ENCODE measurements at regions of chr15 and their contacts with region 1.

Region 1: DNA sequence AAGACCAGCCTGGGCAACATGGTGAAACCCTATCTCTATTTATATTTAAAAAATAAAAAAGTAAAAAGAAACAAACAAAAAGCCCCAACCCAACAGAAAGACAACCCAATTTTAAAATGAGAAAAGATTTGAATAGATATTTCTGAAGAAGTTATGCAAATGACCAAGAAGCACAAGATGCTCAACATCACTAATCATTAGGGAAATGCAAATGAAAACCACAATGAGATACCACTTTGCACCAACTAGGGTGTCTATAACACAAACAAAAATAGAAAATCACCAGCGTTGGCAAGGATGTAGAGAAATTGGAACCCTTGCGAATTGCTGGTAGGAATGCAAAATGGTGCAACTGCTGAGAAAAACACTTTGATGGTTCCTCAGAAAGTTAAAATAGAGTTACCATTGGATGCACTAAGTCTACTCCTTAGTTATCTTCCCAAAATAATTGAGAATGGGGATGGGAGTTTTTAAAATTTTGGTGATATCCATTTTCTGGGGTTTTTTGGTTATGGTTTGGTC is 45.8 kb upstream of the CCNB2 start:
- DNase-seq: no peak
- H3K27ac ChIP-seq: no peak overlapping the region
- CTCF ChIP-seq: no peak

Region 2: GRCh38 chr15:59048897-59049296 is 10.2 kb before region 1 on chr15:
- CTCF ChIA-PET with region 1: interaction called, 10 read pairs
- POLR2A ChIA-PET with region 1: no interaction called
- DNase-seq: no peak
- H3K27ac ChIP-seq: no peak overlapping the region
- CTCF ChIP-seq: no peak

Region 3: GRCh38 chr15:59099162-59099685 is 40.1 kb after region 1 on chr15:
- CTCF ChIA-PET with region 1: no interaction called
- POLR2A ChIA-PET with region 1: no interaction called
- DNase-seq: no peak
- H3K27ac ChIP-seq: no peak overlapping the region
- CTCF ChIP-seq: no peak

Region 4: DNA sequence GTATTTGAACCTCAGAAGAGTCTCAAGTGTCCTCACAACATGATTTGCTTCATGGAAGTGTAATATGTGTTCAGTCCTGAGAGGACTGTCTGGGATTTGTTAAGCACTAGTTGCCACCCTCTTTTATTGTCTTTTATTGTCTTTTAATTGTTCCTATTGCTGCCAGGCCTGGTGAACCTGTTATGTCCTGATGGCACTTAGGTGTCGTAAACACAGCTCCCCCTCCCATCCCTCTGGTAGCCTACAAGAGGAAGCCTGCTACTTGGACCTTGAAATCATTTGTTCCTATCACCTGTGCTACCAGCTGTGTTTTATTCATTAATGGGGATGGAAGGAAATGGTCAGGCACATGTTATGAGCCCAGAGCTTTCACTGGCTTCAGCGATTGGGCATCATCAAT is 65.1 kb after region 1 on chr15:
- CTCF ChIA-PET with region 1: no interaction called
- POLR2A ChIA-PET with region 1: no interaction called
- DNase-seq: no peak
- H3K27ac ChIP-seq: no peak overlapping the region
- CTCF ChIP-seq: no peak

Region 5: DNA sequence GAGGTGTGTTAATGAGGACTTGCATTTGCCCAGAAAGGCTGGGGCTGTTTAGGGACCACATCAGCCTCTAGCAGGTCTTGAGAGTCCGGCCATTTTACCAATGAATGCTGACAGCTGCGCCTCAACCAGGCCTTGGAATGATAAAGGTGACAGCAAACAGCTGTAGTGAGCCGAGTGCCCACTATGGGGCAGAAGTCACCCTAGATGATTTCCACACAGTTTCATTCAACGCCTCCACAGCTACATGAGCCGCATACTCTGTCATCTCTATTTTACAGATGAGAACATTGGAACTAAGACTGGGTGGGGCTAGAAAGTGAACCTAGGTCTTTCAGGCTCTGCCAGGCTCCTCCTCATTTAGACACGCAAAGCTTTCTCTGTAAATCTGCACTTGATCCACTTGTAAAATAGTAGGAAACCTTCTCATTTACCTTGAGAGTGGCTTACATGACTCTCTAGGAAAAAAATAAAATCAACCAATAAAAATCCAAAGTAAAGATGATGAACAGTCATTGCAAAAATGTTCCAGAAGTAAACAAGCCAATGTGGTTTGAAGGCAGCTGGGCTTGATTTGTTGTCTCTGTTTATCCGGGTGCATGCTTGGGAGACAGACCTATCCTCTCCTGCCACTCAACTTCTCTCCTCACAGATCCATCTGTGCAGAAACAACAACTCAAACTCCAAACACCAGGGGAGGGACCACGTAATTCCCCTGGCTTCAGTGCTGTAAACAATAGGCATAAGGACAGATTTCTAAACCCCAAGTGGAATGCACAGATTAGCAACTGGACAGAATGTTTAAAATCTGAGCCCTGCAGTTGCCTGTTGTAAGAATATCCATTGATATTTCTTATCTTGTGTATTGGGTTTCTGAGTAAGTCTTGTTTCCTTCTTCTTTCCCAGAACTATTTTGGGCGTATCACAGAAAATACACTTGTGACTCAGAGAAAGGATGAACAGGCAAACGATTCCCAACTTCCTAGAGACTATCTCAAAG is 116.0 kb after region 1 on chr15:
- CTCF ChIA-PET with region 1: no interaction called
- POLR2A ChIA-PET with region 1: no interaction called
- DNase-seq: no peak
- H3K27ac ChIP-seq: peak overlapping the region; percentile 3; the same call in 1 of the 2 replicates
- CTCF ChIP-seq: no peak; the same call in 1 of the 2 replicates

Region 6: GRCh38 chr15:59388670-59389069 is 329.5 kb after region 1 on chr15:
- CTCF ChIA-PET with region 1: no interaction called
- POLR2A ChIA-PET with region 1: no interaction called
- DNase-seq: peak; percentile 70
- H3K27ac ChIP-seq: peak overlapping the region; percentile 67
- CTCF ChIP-seq: no peak